WTC11 (cell line): ENCODE measurements at regions of chr1 and their contacts with region 1.

Region 1: DNA sequence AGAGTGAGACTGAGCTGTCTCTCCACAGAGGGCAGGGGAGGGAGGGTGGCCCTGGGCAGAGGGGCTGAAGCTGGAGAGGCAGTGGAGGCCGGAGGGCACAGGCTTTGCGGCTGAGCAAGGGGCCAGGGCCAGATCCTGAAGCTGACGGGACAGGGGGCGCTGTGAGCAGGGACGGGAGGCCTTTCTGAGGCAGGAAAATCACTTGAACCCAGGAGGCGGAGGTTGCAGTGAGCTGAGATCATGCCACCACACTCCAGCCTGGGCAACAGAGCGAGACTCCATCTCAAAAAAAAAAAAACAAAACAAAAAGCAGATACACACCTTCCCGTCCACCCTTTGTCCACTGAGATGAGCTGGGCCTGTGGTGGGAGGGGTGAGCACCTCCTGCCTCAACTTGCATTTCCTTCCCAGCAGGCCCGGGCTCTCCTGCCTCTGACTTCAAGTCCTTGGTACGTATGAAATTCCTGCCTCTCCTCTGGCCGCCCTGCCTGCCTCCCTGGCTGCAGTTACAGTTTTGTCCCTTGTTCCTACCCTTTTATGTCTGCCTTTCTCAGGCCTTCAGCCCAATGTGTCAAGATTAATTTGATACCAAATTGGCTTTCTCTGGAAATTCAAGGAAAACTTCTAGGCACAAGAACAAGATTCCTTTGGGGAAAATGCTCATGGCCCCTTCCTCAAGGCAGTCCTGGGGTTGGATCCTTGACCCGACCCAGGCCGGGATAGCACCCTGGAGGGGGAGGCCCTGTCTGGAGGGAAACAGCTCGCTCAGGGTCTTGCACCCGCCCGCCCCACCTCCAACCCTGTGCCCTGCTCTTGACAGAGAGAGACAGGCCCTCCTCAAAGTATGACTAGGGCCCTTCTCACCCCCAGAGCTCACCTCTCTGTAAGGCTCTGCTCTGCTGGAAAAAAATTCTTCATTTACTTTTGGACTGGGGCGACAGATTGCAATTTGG is 11.2 kb upstream of the ADAMTSL4 start:
- DNase-seq: peak; percentile 76
- ATAC-seq: peak; percentile 85
- H3K4me3 Mint-ChIP-seq: no peak overlapping the region
- H3K27ac Mint-ChIP-seq: peak overlapping the region; percentile 90
- H3K4me1 Mint-ChIP-seq: peaks cover 17% of the 10 kb centered on the region
- H3K27me3 Mint-ChIP-seq: no peaks in the 10 kb centered on the region
- CTCF ChIP-seq: no peak

Region 2: GRCh38 chr1:150515328-150516048 is 22.5 kb before region 1 on chr1 and contains the start of gene FALEC:
- CTCF ChIA-PET with region 1: interaction called, 139 read pairs
- POLR2A ChIA-PET with region 1: interaction called, 6 read pairs
- DNase-seq: peak; percentile 97
- ATAC-seq: peak; percentile 97
- H3K4me3 Mint-ChIP-seq: peak within 1 kb of the TSS; percentile 79
- H3K27ac Mint-ChIP-seq: peak within 1 kb of the TSS; percentile 91
- H3K4me1 Mint-ChIP-seq: peaks cover 12% of the 10 kb centered on the region
- H3K27me3 Mint-ChIP-seq: no peaks in the 10 kb centered on the region; the same call in 1 of the 2 replicates
- CTCF ChIP-seq: no peak
- total RNA-seq, gene FALEC: 0.71 to 1.2 TPM (median 1.0 TPM) in 3 replicates

Region 3: GRCh38 chr1:150548632-150549495 is 10.9 kb after region 1 on chr1 and contains the start of gene ADAMTSL4:
- CTCF ChIA-PET with region 1: interaction called, 124 read pairs
- POLR2A ChIA-PET with region 1: interaction called, 3 read pairs
- DNase-seq: peak; percentile 63
- ATAC-seq: peak; percentile 63
- H3K4me3 Mint-ChIP-seq: peak within 1 kb of the TSS; percentile 80
- H3K27ac Mint-ChIP-seq: no peak within 1 kb of the TSS
- H3K4me1 Mint-ChIP-seq: peaks cover 25% of the 10 kb centered on the region
- H3K27me3 Mint-ChIP-seq: peaks cover 43% of the 10 kb centered on the region
- CTCF ChIP-seq: no peak
- total RNA-seq, gene ADAMTSL4: 6.6 to 14.7 TPM (median 14.1 TPM) in 3 replicates